IMR-90 (cell line): ENCODE measurements at regions of chr19 and their contacts with region 1.

Region 1: DNA sequence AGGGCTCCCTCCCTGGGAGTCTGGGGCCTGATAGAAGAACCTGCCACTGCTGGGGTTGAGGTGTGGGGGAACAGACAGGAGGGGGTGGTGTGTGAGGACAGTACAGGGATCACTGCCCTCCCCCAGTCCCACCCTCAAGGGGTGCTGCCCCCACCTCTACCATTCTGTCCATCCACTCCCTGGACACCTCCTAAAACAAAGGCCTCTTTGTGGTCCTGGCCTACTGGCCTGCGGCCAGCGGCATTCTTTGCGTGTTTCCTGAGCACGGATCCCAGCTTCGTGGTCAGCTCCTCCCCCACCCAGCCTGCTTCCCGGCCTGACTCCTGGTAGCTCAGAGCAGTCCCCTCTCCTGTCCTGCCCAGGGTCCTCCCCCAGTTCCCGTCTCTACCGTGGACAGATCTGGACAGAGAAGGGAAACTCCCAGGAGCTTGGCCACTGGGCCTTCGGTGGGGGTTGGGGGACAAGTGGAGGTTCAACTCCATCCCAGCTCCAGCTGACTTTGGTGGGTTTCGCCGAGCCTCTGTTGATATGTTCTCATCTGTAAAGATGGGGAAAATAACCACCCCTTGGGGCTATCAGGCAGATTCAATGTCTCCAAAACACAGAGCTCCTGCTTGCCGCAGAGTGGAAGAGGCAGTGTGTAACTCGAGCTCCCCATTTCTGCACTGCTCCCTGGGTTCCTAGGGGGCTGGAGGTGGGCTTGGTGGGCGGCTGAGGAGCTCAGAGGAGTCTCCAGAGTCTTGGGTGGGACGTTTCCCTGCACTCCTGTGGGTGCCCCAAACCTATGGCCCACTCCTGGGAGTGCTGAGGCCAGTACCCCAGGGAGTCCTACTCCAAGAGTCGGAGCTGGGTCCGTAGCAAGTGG is 48.7 kb downstream of the LYL1 start:
- DNase-seq: peak; percentile 96
- ATAC-seq: peak; percentile 65
- H3K4me3 ChIP-seq: no peak overlapping the region
- H3K27ac ChIP-seq: peak overlapping the region; percentile 100
- H3K4me1 ChIP-seq: peaks cover 72% of the 10 kb centered on the region
- H3K27me3 ChIP-seq: no peaks in the 10 kb centered on the region
- CTCF ChIP-seq: no peak
- POLR2A ChIP-seq: no peak
- RAD21 ChIP-seq: no peak

Region 2: DNA sequence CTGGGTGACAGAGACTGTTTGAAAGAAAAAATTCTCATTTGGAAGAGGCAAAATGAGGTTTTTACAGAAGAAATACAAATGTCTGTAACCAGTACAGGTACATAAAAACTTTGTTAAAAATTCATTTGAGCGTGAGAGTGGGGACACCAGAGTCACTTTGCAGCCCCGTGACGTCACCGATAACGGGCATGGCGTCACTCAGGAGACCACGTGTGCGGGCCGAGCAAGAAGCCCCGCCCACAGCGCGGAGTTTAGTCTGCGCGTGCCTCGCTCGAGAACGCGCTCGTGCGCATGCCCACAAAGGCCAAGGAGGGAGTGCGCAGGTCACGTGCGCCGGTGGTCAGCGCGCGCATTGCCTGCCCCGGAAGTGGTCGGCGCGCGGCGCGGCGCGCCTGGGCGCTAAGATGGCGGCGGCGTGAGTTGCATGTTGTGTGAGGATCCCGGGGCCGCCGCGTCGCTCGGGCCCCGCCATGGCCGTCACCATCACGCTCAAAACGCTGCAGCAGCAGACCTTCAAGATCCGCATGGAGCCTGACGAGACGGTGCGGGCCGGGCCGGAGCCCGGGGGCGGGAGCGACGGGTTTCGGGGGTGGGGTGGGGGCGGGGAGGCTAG is 108.4 kb before region 1 on chr19 and contains the start of gene RAD23A:
- CTCF ChIA-PET with region 1: no interaction called
- POLR2A ChIA-PET with region 1: no interaction called
- dilution Hi-C with region 1: no loop called
- in situ Hi-C with region 1: no loop called
- intact Hi-C with region 1: no loop called
- DNase-seq: peak; percentile 98
- ATAC-seq: peak; percentile 82
- H3K4me3 ChIP-seq: peak within 1 kb of the TSS; percentile 60
- H3K27ac ChIP-seq: peak within 1 kb of the TSS; percentile 84
- H3K4me1 ChIP-seq: peaks cover 6% of the 10 kb centered on the region
- H3K27me3 ChIP-seq: no peaks in the 10 kb centered on the region
- CTCF ChIP-seq: no peak
- POLR2A ChIP-seq: peak; percentile 95
- RAD21 ChIP-seq: no peak
- total RNA-seq, gene RAD23A: 54.3 and 56.4 TPM in 2 replicates

Region 3: GRCh38 chr19:13033819-13034611 is 20.0 kb before region 1 on chr19:
- CTCF ChIA-PET with region 1: interaction called, 13 read pairs
- POLR2A ChIA-PET with region 1: interaction called, 11 read pairs
- dilution Hi-C with region 1: no loop called
- in situ Hi-C with region 1: no loop called
- intact Hi-C with region 1: no loop called
- DNase-seq: peak; percentile 45
- ATAC-seq: peak; percentile 38; the same call in 1 of the 2 replicates
- H3K4me3 ChIP-seq: no peak overlapping the region
- H3K27ac ChIP-seq: no peak overlapping the region
- H3K4me1 ChIP-seq: peaks cover 45% of the 10 kb centered on the region
- H3K27me3 ChIP-seq: no peaks in the 10 kb centered on the region
- CTCF ChIP-seq: peak; percentile 66
- POLR2A ChIP-seq: no peak
- RAD21 ChIP-seq: peak; percentile 61

Region 4: GRCh38 chr19:13633109-13633508 is 579.1 kb after region 1 on chr19:
- CTCF ChIA-PET with region 1: no interaction called
- POLR2A ChIA-PET with region 1: interaction called, 13 read pairs
- dilution Hi-C with region 1: no loop called
- in situ Hi-C with region 1: no loop called
- intact Hi-C with region 1: no loop called
- DNase-seq: peak; percentile 79
- ATAC-seq: peak; percentile 84
- H3K4me3 ChIP-seq: no peak overlapping the region
- H3K27ac ChIP-seq: no peak overlapping the region
- H3K4me1 ChIP-seq: peaks cover 8% of the 10 kb centered on the region
- H3K27me3 ChIP-seq: no peaks in the 10 kb centered on the region
- CTCF ChIP-seq: no peak
- POLR2A ChIP-seq: no peak
- RAD21 ChIP-seq: no peak